Calu3 (cell line): ENCODE measurements at regions of chr14 and their contacts with region 1.

Region 1: DNA sequence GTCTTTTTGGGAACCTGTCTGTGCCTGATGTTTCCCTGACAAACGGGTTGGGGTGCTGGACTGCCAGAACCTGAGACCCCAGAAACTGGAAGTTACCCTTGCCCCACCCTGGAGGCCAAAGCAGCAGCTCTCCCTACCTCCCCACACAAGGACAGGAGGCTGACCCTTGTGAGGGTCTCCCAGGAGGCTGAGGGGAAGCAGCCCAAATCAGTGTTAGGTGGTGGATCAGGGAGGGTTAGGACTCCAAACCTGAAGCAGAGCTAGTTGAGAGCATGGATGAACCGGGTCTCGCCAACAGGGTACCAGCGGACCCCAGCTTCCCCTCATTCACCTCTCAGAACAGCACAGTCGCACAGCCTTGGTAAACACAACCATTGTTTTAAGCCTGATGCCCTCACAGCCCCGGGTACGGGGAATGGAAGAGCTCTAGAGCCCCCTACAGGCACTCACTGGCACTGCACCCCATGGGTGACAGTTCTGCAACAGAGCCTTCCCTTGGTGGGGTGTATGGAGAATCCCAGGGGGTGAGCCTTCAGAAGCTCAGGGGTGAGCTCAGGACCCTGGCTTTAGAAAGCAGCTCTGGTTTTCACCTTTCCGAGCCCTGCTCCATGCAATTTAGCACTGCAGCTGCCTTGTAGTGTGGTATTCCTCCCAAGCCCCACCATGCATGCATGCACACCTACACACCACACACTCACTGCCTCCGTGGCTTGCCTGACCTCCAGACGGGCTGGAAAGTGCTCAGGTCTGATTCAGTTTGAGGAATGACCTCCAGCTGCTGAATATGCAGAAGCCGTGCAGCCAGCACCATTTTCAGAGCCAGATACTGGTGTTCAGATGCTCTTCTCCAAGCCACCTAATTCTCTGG is 11.2 kb downstream of the ESRRB start:
- DNase-seq: peak; percentile 84
- H3K4me3 Mint-ChIP-seq: no peak overlapping the region
- H3K27ac Mint-ChIP-seq: no peak overlapping the region
- H3K4me1 Mint-ChIP-seq: no peaks in the 10 kb centered on the region
- H3K27me3 Mint-ChIP-seq: peaks cover 77% of the 10 kb centered on the region
- CTCF ChIP-seq: peak; percentile 92

Region 2: DNA sequence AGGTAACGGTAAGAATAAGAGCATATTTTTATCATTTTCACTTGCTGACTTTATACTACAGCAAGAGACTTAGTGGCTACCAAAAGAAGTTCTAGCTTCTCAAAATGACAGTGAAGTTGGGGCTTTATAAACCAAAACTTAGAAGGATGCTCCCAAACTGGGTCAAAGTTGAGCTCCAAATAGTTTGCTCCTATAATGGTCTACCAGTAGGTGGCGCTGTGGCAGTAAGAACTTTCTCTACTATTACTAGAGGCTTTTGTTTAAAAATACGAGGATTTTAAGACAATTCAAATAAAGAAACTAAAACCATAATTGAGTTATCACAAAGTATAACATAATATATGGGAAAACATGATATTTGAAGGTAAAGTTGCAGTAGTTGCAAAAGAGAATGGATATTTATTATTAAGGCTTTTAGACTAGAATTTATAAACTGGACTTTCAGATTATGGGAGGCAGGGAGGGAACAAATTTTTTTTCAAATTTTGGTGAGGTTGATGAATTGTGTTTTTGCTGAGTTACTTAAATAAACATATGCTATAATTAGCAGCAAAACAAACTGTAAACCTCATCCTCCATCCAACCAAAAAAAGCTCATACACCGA is 480.4 kb before region 1 on chr14:
- CTCF ChIA-PET with region 1: no interaction called
- intact Hi-C with region 1: loop called (anchors 10 kb)
- DNase-seq: peak; percentile 67
- H3K4me3 Mint-ChIP-seq: no peak overlapping the region
- H3K27ac Mint-ChIP-seq: no peak overlapping the region
- H3K4me1 Mint-ChIP-seq: peaks cover 12% of the 10 kb centered on the region
- H3K27me3 Mint-ChIP-seq: no peaks in the 10 kb centered on the region
- CTCF ChIP-seq: peak; percentile 53

Region 3: DNA sequence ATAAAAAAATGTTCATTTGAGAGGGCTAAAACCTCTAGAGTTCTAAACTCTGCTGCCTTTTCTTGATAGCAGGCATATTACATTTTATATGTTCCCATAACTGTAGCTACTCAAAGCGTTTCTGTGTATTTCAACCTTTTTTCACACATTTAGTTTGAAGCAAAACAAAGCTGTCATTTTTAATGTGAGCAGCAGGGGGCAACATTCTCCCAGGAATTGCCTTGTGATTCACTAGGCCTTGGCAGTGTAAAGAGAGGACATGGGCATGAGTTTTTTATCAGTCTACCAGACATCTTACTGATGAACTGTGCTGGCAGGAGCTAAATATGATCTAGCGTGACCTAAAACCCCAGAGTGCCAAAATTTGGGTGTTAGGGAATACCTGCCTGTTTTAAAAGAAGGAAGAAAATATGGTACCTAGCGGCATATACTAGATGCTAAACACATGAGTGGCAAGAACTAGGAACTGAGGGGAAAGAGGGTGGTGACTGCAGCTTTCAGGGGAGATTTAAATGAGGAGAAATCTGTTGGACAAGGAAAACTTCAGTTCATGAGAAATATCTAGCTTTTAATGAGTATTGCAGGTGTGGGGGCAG is 336.3 kb before region 1 on chr14:
- CTCF ChIA-PET with region 1: interaction called, 8 read pairs
- intact Hi-C with region 1: loop called (anchors 1 kb)
- DNase-seq: peak; percentile 58
- H3K4me3 Mint-ChIP-seq: no peak overlapping the region
- H3K27ac Mint-ChIP-seq: no peak overlapping the region
- H3K4me1 Mint-ChIP-seq: no peaks in the 10 kb centered on the region
- H3K27me3 Mint-ChIP-seq: no peaks in the 10 kb centered on the region
- CTCF ChIP-seq: peak; percentile 59